HCT116 (cell line): ENCODE measurements at regions of chr1 and their contacts with region 1.

Region 1: GRCh38 chr1:48236716-48237470 is 14.4 kb downstream of the SLC5A9 start:
- DNase-seq: peak; percentile 28
- ATAC-seq: peak; percentile 75
- H3K4me3 ChIP-seq: no peak overlapping the region
- H3K27ac ChIP-seq: no peak overlapping the region
- H3K4me1 ChIP-seq: no peaks in the 10 kb centered on the region
- H3K27me3 ChIP-seq: peaks cover 7% of the 10 kb centered on the region; the same call in 1 of the 2 replicates
- CTCF ChIP-seq: peak; percentile 43 to 70 (median 59); a peak in 5 of 6 replicates
- POLR2A ChIP-seq: no peak
- RAD21 ChIP-seq: peak; percentile 76

Region 2: DNA sequence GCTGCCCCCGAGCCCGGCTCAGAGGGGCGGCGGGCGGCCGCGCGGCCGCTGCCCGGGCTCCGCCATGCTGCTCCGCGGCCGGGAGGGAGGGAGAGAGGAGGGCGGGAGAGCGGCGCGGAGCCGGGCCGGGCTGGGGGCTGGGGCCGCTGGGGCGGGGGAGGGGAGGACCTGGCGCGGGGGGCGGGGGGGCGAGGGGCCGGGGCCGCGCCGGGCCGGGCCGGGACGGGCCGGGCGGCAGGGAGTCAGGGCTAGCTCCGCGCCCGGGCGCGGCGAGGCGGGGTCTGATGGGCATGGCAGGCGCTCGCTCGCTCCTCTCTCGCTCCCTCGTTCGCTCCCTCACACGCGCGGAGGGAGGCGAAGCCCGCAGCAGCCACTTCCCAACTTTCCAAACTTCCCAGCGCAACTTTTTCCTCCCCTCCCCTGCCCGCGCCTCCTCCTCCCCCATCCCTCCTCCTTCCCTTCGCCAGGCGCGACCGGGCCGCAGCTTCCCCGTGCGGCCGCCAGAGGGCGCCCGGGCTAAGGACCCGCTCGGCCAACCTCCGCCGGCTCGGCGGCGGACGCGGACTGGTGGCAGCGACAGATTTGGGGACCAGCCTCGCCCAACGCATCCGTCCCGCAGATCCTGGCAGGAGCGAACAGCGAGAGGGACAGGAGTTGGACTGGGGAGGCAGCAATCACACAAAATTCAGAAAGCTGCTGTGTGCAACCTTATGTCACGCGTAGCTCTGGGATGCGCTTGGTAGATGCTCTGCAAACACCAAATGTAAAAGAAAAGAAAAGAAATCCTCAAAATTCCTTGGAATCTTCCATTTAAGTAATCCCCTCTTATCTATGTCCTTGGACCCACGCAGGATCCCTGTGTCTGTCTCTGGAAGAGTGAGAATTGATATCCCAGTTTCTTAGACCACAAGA is 239.3 kb before region 1 on chr1 and contains the start of gene TRABD2B:
- CTCF ChIA-PET with region 1: no interaction called
- POLR2A ChIA-PET with region 1: no interaction called
- RAD21 ChIA-PET with region 1: no interaction called
- intact Hi-C with region 1: loop called (anchors 5 kb)
- DNase-seq: peak; percentile 26
- ATAC-seq: peak; percentile 97
- H3K4me3 ChIP-seq: peak within 1 kb of the TSS; percentile 27 to 42
- H3K27ac ChIP-seq: no peak within 1 kb of the TSS
- H3K4me1 ChIP-seq: peaks cover 0 to 3% of the 10 kb centered on the region in 2 experiments; a peak in 2 of 4 replicates
- H3K27me3 ChIP-seq: peaks cover 18% of the 10 kb centered on the region; the same call in 1 of the 2 replicates
- CTCF ChIP-seq: peak; percentile 81 to 96 (median 92)
- POLR2A ChIP-seq: no peak
- RAD21 ChIP-seq: peak; percentile 78
- total RNA-seq, gene TRABD2B: 0.05 TPM

Region 3: GRCh38 chr1:48093696-48094528 is 143.0 kb before region 1 on chr1:
- CTCF ChIA-PET with region 1: interaction called, 5 read pairs
- POLR2A ChIA-PET with region 1: interaction called, 6 read pairs
- RAD21 ChIA-PET with region 1: no interaction called
- intact Hi-C with region 1: loop called (anchors 1 kb)
- DNase-seq: peak; percentile 72
- ATAC-seq: peak; percentile 99
- H3K4me3 ChIP-seq: no peak overlapping the region
- H3K27ac ChIP-seq: no peak overlapping the region
- H3K4me1 ChIP-seq: peaks cover 0 to 6% of the 10 kb centered on the region in 2 experiments; a peak in 2 of 4 replicates
- H3K27me3 ChIP-seq: peaks cover 37% of the 10 kb centered on the region
- CTCF ChIP-seq: peak; percentile 83 to 95 (median 88)
- POLR2A ChIP-seq: no peak
- RAD21 ChIP-seq: peak; percentile 78

Region 4: GRCh38 chr1:48109390-48110013 is 127.4 kb before region 1 on chr1:
- CTCF ChIA-PET with region 1: interaction called, 3 read pairs
- POLR2A ChIA-PET with region 1: interaction called, 3 read pairs
- RAD21 ChIA-PET with region 1: no interaction called
- intact Hi-C with region 1: loop called (anchors 2 kb)
- DNase-seq: peak; percentile 24
- ATAC-seq: peak; percentile 89
- H3K4me3 ChIP-seq: no peak overlapping the region
- H3K27ac ChIP-seq: no peak overlapping the region
- H3K4me1 ChIP-seq: no peaks in the 10 kb centered on the region
- H3K27me3 ChIP-seq: peaks cover 26% of the 10 kb centered on the region
- CTCF ChIP-seq: peak; percentile 72 to 86 (median 85)
- POLR2A ChIP-seq: no peak
- RAD21 ChIP-seq: peak; percentile 81